ENCODE measurements at regions of chr11 and their contacts with region 1.

Region 1: GRCh38 chr11:3854977-3855807 is at the start of gene STIM1:
- DNase-seq: peak; percentile 99
- ATAC-seq: peak; percentile 70
- H3K4me3 Mint-ChIP-seq: peak within 1 kb of the TSS; percentile 99
- H3K27ac Mint-ChIP-seq: peak within 1 kb of the TSS; percentile 99
- H3K4me1 Mint-ChIP-seq: peaks cover 50% of the 10 kb centered on the region
- H3K27me3 Mint-ChIP-seq: no peaks in the 10 kb centered on the region
- total RNA-seq, gene STIM1: 98.8 to 101 TPM

Region 2: DNA sequence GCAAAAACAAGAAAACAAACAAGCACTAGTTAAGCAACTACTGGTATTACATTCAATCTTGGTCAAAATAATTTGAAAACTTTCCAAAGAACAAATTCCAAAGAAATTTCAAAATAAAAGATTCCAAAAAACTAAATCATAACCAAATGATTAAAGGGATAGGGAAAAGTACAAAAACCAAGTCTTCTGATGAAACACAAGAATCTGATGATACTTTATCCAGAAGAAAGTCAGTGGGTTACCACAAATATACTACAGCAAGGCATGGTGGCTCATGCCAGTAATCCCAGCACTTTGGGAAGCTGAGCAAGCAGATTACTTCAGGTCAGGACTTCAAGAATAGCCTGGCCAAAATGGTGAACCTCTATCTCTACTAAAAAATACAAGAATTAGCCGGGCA is 117.0 kb before region 1 on chr11:
- POLR2A ChIA-PET with region 1: no interaction called
- DNase-seq: no peak
- ATAC-seq: no peak
- H3K4me3 Mint-ChIP-seq: no peak overlapping the region
- H3K27ac Mint-ChIP-seq: no peak overlapping the region
- H3K4me1 Mint-ChIP-seq: no peaks in the 10 kb centered on the region
- H3K27me3 Mint-ChIP-seq: no peaks in the 10 kb centered on the region

Region 3: DNA sequence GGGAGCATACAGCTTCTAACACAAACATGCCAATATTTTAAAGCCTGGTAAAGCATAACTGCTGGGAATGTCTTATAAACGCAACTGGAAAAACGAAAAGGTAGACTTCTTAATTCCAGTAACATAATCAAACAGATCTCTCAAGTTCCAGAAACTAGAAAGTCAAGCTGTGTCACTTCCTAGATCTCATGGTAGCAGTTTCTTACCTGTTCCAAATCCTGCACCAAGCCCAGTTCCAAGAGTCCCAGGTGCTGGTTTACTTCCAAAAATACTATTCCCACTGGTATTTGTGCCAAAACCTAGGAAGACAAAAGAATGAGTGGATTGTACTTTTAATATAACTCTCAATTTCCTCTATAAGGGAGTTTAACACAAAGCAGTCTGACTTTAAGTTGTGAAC is 102.1 kb before region 1 on chr11:
- POLR2A ChIA-PET with region 1: no interaction called
- DNase-seq: no peak
- ATAC-seq: no peak
- H3K4me3 Mint-ChIP-seq: no peak overlapping the region
- H3K27ac Mint-ChIP-seq: no peak overlapping the region
- H3K4me1 Mint-ChIP-seq: peaks cover 3% of the 10 kb centered on the region
- H3K27me3 Mint-ChIP-seq: no peaks in the 10 kb centered on the region

Region 4: GRCh38 chr11:3797329-3798095 is 57.7 kb before region 1 on chr11 and contains the start of gene NUP98:
- POLR2A ChIA-PET with region 1: interaction called, 11 read pairs
- DNase-seq: peak; percentile 99
- ATAC-seq: peak; percentile 97
- H3K4me3 Mint-ChIP-seq: peak within 1 kb of the TSS; percentile 93
- H3K27ac Mint-ChIP-seq: peak within 1 kb of the TSS; percentile 94
- H3K4me1 Mint-ChIP-seq: peaks cover 35% of the 10 kb centered on the region
- H3K27me3 Mint-ChIP-seq: no peaks in the 10 kb centered on the region
- total RNA-seq, gene NUP98: 91.4 to 96.7 TPM

Region 5: DNA sequence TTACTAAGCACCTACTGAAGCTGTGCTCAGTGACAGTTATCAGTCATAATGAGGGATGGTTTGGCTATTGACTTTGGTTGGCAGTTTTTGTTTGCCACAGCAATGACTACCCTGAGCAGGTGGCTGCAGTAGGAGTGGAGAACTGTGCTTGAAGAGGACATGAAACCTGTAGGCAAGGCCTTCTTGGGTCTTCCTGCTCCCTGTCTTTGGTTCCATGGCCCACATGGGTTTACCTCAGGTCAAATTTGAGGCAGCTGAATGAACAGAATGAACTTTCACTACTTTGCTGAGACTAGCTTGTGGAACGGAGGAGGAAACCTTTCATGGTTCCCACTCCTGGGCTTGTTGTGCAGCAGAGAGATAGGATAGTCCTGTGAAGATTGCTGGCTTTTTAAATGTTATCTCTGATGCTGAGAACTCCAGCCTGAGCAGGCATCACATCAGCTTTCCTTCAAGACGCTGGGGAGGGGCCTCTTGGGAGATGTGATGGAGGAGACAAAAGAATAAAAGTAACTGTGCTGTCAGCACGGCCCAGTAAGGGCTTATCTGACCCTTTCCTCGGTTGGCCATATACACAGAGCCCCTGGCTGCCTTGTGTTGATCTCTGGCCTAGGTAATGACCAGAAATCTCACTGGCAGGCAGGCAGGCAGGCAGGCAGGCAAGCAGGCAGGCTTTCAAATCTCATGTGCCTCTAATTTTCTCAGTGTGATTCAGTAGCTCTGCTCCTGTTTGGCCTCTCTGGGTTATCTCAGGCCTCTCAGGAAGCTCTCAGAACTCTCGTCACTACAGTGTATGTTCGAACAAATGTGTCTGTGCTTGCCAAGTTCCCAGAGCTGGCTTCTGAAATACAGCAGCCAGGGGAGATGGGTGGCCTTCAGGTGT is 12.3 kb after region 1 on chr11:
- POLR2A ChIA-PET with region 1: interaction called, 46 read pairs
- DNase-seq: no peak
- ATAC-seq: peak; percentile 19
- H3K4me3 Mint-ChIP-seq: peak overlapping the region; percentile 59
- H3K27ac Mint-ChIP-seq: peak overlapping the region; percentile 76
- H3K4me1 Mint-ChIP-seq: peaks cover 71% of the 10 kb centered on the region
- H3K27me3 Mint-ChIP-seq: no peaks in the 10 kb centered on the region

Region 6: DNA sequence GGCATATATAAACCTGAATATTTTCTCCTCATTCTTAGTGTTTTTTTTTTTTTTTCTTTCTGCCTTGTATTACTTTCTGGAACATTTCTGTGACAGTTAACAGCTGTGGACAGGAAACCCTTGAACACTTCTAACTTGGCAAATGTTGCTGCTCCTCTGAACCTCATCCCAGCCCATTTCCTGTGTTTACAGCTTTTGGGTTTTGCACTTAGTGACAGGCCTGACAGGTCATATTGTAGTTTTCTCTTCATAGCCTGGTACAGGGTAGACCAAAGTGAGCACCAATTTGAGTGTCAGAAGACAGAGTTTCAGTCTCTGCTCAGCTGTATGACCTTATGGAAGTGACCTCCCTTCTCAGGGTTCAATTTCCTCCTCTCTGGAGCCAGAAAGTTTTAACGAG is 91.9 kb after region 1 on chr11:
- POLR2A ChIA-PET with region 1: interaction called, 36 read pairs
- DNase-seq: no peak
- ATAC-seq: peak; percentile 74
- H3K4me3 Mint-ChIP-seq: peak overlapping the region; percentile 75
- H3K27ac Mint-ChIP-seq: peak overlapping the region; percentile 98
- H3K4me1 Mint-ChIP-seq: peaks cover 86% of the 10 kb centered on the region
- H3K27me3 Mint-ChIP-seq: no peaks in the 10 kb centered on the region

Region 7: DNA sequence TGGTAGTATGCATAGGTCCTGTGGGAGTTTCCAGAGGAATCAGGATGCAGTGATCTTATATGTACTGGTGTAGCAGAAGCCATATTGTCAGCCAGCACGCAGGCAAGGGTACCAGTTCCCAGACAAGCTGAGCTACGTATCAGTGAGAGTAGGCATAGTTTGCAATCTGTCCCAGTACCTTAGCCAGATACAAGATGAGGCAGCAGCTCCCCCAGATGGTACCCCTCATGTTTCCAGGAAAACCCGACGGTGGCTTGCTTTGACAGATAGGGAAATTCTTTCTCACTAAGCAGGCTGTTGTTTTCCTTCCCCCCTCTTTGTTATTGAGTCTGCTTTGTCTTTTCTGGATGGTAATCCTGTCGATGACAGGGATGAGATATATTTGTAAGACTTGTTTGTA is 129.7 kb after region 1 on chr11:
- POLR2A ChIA-PET with region 1: interaction called, 11 read pairs
- DNase-seq: peak; percentile 42
- ATAC-seq: peak; percentile 66
- H3K4me3 Mint-ChIP-seq: no peak overlapping the region
- H3K27ac Mint-ChIP-seq: peak overlapping the region; percentile 2
- H3K4me1 Mint-ChIP-seq: peaks cover 58% of the 10 kb centered on the region
- H3K27me3 Mint-ChIP-seq: no peaks in the 10 kb centered on the region

Region 8: DNA sequence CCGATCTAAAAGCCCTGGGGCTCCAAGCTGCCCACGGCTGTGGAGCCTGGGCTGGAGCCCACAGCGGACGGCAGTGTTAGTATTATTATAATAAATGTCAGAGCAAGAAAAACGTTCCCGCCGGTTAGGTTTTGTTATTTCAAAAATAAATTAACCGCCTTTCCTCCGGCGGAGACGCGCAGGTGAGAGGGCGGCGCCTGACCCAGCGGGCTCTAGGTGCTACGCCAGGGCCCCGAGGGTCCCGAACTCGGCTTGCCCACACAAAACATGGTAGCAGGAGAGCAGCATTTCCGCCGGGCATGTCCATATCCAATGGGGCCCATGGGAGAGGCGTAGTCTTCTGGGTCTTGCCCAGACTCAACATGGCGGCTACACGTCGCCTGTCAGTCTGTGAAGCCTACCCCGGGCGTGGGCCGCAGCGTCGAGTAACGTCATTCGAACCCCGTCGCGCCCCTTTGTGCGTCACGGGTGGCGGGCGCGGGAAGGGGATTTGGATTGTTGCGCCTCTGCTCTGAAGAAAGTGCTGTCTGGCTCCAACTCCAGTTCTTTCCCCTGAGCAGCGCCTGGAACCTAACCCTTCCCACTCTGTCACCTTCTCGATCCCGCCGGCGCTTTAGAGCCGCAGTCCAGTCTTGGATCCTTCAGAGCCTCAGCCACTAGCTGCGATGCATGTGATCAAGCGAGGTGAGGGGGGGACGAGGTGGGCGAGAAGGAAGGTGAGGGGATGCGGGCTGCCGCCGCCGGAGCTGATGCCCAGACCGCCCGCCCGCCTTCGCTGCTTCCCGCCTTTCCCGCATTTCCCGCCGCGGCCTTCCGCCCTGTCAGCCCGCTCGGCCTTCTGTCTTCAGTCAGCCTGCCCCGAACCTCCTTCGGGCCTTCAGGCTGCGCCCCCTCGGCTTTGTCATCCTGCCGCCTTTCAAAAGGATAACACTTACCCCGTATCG is 239.4 kb after region 1 on chr11 and contains the start of gene RRM1:
- POLR2A ChIA-PET with region 1: interaction called, 13 read pairs
- DNase-seq: peak; percentile 94
- ATAC-seq: peak; percentile 93
- H3K4me3 Mint-ChIP-seq: peak within 1 kb of the TSS; percentile 98
- H3K27ac Mint-ChIP-seq: peak within 1 kb of the TSS; percentile 99
- H3K4me1 Mint-ChIP-seq: peaks cover 72% of the 10 kb centered on the region
- H3K27me3 Mint-ChIP-seq: no peaks in the 10 kb centered on the region
- total RNA-seq, gene RRM1: 126 to 130 TPM

Region 9: DNA sequence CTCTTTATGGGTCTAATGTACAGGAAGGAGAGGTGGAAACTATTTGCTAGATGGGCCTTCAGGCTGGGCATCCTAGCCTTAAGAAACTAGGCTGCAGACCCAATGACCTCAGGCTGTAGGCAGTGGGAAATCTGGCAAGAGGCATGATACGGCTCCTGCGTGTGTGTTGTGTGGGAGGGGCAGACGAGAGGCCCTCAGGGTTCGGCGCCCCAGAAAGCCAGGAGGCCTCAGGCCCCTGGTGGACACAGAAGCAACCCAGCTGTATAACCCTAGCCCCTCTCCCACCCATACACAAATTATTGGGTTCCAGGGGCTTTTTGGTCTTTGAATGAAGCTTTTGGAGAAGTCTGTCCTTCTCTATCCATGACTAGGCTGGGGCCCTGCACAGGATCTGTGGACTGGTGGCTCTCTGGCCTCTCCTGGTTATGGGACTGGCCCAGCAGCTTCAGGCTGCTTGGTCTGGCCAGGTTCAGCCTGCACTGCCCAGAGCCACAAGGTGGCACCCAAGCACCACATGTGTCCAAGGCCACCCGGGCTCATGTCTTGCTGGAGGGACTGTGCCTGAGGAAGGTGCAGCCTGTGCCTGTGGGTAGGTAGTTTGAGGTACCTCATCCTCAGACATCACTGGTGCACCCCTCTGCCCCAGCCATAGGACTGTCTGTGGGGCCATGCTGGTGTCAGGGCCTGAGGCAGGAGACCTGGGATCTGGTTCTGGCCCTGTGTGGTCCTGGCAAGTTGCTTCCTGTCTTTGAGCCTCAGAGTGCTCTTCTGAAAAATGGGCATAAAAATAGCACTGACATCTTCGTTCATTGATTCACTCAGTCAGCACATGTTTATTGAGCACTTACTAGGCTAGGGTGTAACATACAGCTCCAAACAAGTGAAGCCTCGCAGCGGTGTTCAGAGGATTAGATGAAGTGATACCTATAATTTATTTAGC is 326.9 kb after region 1 on chr11:
- POLR2A ChIA-PET with region 1: no interaction called
- DNase-seq: peak; percentile 56
- ATAC-seq: peak; percentile 57
- H3K4me3 Mint-ChIP-seq: no peak overlapping the region
- H3K27ac Mint-ChIP-seq: no peak overlapping the region
- H3K4me1 Mint-ChIP-seq: peaks cover 15% of the 10 kb centered on the region
- H3K27me3 Mint-ChIP-seq: peaks cover 5% of the 10 kb centered on the region